ENCODE measurements at regions of chr12 and their contacts with region 1.

Region 1: DNA sequence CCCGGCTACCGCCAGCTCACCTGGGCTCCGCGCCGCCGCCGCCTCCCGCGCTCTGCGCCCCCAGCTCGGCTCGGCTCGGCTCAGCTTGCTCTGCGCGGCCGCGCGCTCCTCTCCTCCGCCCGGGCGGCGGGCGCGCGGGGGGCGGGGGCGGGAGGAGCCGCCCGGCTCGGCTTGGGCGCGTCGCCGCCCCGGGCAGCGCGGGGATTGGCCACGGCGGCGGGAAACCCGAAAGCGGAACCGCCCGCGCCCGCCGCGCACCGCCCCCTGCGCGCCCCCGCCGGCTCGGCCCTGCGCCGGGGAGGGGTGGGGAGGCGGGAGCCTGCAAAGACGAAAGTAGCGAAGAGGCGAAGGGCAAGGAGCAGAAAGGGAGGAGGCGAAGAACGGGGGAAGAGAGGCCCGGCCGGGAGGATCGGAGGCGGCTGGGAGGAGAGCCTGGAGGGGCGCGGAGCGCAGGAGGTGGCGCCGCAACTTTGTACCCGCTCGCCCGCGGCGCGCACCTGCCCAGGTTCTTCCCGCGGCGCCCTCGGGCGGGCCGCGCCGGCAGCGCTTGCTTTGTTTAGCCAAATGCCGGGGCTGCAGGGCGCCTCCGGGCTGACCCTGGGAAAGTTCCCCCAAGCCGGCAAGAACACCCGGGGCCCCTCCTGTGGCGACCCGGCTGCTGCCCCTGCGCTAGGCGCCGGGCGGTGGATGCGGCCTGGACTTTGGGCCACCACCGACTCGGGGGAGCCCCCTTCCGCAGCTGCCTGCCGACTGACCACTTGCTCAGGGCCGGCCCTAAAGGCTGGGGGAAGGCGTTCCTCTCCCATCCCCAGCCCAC is at the start of gene CAMKK2:
- DNase-seq: peak; percentile 91 to 94
- ATAC-seq: peak; percentile 89 to 95 (median 91)
- H3K4me3 ChIP-seq: peak within 1 kb of the TSS; percentile 65
- H3K4me3 Mint-ChIP-seq: peak within 1 kb of the TSS; percentile 87
- H3K27ac ChIP-seq: peak within 1 kb of the TSS; percentile 55
- H3K27ac Mint-ChIP-seq: peak within 1 kb of the TSS; percentile 23 to 84
- H3K4me1 ChIP-seq: peaks cover 24% of the 10 kb centered on the region
- H3K4me1 Mint-ChIP-seq: peaks cover 0 to 14% of the 10 kb centered on the region in 2 donors
- H3K27me3 ChIP-seq: no peaks in the 10 kb centered on the region
- H3K27me3 Mint-ChIP-seq: no peaks in the 10 kb centered on the region
- CTCF ChIP-seq: peak; percentile 22
- total RNA-seq, gene CAMKK2: 19.6 to 27.4 (median 20.9) TPM

Region 2: DNA sequence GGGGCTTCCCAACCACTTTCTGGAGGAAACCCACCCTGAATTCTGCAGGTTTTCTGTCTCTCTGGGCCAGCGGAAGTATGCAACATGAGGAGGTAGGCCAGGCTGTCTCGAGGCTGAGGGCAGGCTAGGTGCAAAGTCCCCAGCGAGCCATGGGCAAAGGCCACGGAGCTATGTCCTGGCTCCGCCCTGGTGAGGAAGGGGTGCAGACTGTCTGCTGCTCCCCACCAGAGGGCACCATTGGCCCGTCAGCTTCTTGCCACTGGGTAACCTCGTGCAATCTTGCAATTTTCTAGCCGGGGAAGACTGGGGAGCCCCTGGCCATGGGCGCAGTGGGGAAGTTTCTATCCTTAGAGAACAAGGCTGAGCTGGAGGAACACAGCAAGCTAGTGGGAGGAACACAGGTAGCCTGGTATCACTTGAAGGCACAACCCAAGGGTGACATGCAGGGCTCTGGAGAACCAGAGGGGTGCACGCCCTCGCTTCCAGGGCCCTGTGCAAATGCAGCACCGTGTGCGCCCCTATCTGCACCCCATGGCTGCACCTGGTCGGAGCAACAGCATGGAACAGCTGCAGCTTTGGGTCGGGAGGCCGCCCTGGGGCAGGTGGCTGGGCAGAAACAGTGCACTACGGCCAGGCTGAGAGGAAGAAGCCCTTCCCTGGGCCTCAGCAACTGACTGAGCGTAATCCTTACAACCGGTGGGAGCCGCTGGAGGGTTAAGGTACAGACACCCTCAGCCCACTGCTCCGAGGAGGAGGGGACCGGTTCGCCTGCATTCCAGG is 1068.3 kb before region 1 on chr12:
- intact Hi-C with region 1: no loop called
- DNase-seq: peak; percentile 85 to 94
- ATAC-seq: peak; percentile 69 to 90 (median 82)
- H3K4me3 ChIP-seq: peak overlapping the region; percentile 2
- H3K4me3 Mint-ChIP-seq: peak overlapping the region; percentile 89
- H3K27ac ChIP-seq: peak overlapping the region; percentile 19
- H3K27ac Mint-ChIP-seq: peak overlapping the region; percentile 76 to 84
- H3K4me1 ChIP-seq: peaks cover 98% of the 10 kb centered on the region
- H3K4me1 Mint-ChIP-seq: peaks cover 86 to 95% of the 10 kb centered on the region in 2 donors
- H3K27me3 ChIP-seq: no peaks in the 10 kb centered on the region
- H3K27me3 Mint-ChIP-seq: no peaks in the 10 kb centered on the region
- CTCF ChIP-seq: peak; percentile 94

Region 3: GRCh38 chr12:121209624-121210572 is 86.9 kb before region 1 on chr12 and contains the start of gene P2RX4:
- intact Hi-C with region 1: loop called (anchors 5 kb)
- DNase-seq: peak; percentile 83 to 95
- ATAC-seq: peak; percentile 71 to 87 (median 77)
- H3K4me3 ChIP-seq: peak within 1 kb of the TSS; percentile 92
- H3K4me3 Mint-ChIP-seq: peak within 1 kb of the TSS; percentile 84
- H3K27ac ChIP-seq: peak within 1 kb of the TSS; percentile 94
- H3K27ac Mint-ChIP-seq: peak within 1 kb of the TSS; percentile 90 to 96
- H3K4me1 ChIP-seq: peaks cover 25% of the 10 kb centered on the region
- H3K4me1 Mint-ChIP-seq: peaks cover 18 to 23% of the 10 kb centered on the region in 2 donors
- H3K27me3 ChIP-seq: no peaks in the 10 kb centered on the region
- H3K27me3 Mint-ChIP-seq: no peaks in the 10 kb centered on the region
- CTCF ChIP-seq: no peak
- total RNA-seq, gene P2RX4: 34.8 to 39.3 (median 38.2) TPM

Measured in natural killer cell (primary cell).